ENCODE measurements at regions of chr19 and their contacts with region 1.

Region 1: DNA sequence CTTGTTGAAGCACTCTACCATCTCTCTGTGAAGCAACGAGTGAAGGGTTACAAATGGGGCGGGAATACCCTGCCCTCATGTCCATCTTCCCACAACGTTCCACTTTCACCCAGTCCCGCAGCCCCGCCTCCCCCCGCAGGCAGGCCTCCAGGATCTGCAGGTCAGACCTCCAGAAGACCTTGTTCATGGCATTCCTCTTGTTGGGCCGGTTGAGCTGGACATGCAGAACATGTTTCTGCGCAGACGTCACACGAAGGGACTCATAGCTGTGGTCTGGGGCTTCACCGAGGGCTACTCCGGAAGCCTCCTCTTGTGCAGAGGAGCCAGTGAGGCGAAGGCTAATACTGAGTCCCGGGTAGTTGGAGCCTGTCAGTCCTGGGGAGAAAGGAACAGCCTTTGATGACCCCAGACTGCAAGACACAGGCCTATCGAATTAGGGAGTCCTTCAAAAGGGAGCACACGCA is 420 bp downstream of the ECH1 start:
- DNase-seq: peak in 1 of 2 donors; percentile 81
- ATAC-seq: peak; percentile 23 to 24
- H3K4me3 ChIP-seq: peak overlapping the region; percentile 63 to 83 (median 74)
- H3K27ac ChIP-seq: peak overlapping the region; percentile 91 to 100 (median 98)
- H3K4me1 ChIP-seq: peaks cover 49 to 60% of the 10 kb centered on the region in 2 donors
- H3K27me3 ChIP-seq: no peaks in the 10 kb centered on the region
- CTCF ChIP-seq: no peak
- POLR2A ChIP-seq: no peak

Region 2: DNA sequence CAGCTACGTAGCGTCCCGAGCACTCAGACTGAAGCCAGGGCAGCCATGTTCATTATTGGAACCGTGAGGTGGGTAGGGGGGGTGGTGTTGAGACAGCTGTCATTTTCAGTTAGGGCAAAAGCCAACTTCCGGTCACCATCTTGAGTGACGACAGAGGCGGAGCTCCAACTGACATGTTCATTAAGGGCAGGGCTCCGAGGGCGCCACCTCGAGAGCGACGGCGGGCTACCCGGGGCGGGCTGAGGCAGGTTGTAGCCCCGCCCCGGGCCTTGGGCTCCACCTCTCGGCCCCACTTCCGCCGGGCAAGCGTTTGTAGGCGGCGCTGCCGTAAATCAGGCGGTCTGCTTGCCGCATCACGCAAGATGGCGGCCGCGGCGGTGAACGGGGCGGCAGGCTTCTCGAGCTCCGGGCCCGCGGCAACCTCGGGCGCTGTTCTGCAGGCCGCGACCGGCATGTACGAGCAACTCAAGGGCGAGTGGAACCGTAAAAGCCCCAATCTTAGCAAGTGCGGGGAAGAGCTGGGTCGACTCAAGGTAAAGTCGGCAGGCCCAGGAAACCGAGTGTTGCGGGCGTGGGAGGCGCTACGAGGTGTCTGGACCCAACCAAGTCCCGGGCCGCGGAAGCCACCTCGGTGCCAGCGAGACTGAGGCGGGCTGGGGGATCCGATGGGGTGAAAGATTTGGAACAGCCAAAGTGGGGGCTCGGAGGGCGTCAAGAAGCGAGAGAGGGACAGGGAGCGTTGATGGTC is 456.6 kb before region 1 on chr19 and contains the start of gene PSMD8:
- in situ Hi-C with region 1: loop called in 1 of 4 experiments (anchors 25 kb)
- intact Hi-C with region 1: loop called (anchors 5 kb)
- DNase-seq: peak; percentile 99 to 100
- ATAC-seq: peak; percentile 81 to 88
- H3K4me3 ChIP-seq: peak within 1 kb of the TSS; percentile 91 to 99 (median 96)
- H3K27ac ChIP-seq: peak within 1 kb of the TSS; percentile 97 to 100 (median 98)
- H3K4me1 ChIP-seq: peaks cover 16 to 25% of the 10 kb centered on the region in 2 donors
- H3K27me3 ChIP-seq: no peaks in the 10 kb centered on the region
- CTCF ChIP-seq: peak in 3 of 5 experiments; percentile 6 to 34 (median 16)
- POLR2A ChIP-seq: peak; percentile 99
- total RNA-seq, gene PSMD8: 819 to 1,400 (median 1,309) TPM

Region 3: DNA sequence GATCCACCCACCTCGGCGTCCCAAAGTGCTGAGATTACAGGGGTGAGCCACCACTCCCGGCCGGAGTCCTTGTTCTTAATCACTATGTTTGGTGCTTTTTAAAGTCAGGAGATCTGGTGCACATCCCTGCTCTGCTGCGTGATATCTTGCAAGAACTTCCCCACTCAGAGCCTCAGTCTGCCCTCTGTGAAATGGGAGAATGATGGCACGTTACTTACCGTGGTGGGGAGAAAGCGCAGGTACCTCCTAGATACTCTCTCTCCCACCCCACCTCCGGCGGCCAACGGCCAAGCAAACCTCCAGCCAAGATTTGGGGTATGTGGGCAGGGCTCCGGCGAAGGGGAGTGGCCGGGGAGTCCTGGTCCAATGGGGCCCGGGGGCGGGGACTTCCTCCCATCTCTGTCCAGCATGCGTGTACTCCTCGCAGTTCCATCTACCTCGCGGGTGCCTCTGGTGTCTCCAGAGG is 397.9 kb before region 1 on chr19 and contains the start of gene RYR1:
- in situ Hi-C with region 1: no loop called
- intact Hi-C with region 1: loop called (anchors 10 kb)
- DNase-seq: peak; percentile 92 to 96
- ATAC-seq: peak; percentile 63 to 66
- H3K4me3 ChIP-seq: peak within 1 kb of the TSS; percentile 69 to 94 (median 86)
- H3K27ac ChIP-seq: peak within 1 kb of the TSS; percentile 98 to 100 (median 98)
- H3K4me1 ChIP-seq: peaks cover 43 to 46% of the 10 kb centered on the region in 2 donors
- H3K27me3 ChIP-seq: no peaks in the 10 kb centered on the region
- CTCF ChIP-seq: no peak
- POLR2A ChIP-seq: peak; percentile 67 to 73
- total RNA-seq, gene RYR1: 607 to 831 (median 724) TPM

Region 4: GRCh38 chr19:38891771-38892170 is 60.6 kb after region 1 on chr19:
- in situ Hi-C with region 1: no loop called
- intact Hi-C with region 1: loop called (anchors 2 kb)
- DNase-seq: no peak
- ATAC-seq: no peak
- H3K4me3 ChIP-seq: no peak overlapping the region
- H3K27ac ChIP-seq: peak overlapping the region; percentile 85 to 96 (median 88)
- H3K4me1 ChIP-seq: peaks cover 54 to 70% of the 10 kb centered on the region in 2 donors
- H3K27me3 ChIP-seq: no peaks in the 10 kb centered on the region
- CTCF ChIP-seq: no peak
- POLR2A ChIP-seq: no peak

Region 5: GRCh38 chr19:38899447-38900219 is 68.5 kb after region 1 on chr19 and contains the starts of genes NFKBIB and SIRT2:
- in situ Hi-C with region 1: loop called in 1 of 4 experiments (anchors 10 kb)
- intact Hi-C with region 1: loop called (anchors 1 kb)
- DNase-seq: peak; percentile 100
- ATAC-seq: peak; percentile 97 to 98
- H3K4me3 ChIP-seq: peak within 1 kb of the TSS; percentile 74 to 98 (median 90)
- H3K27ac ChIP-seq: peak within 1 kb of the TSS; percentile 90 to 99 (median 96)
- H3K4me1 ChIP-seq: peaks cover 45 to 50% of the 10 kb centered on the region in 2 donors
- H3K27me3 ChIP-seq: no peaks in the 10 kb centered on the region
- CTCF ChIP-seq: no peak
- POLR2A ChIP-seq: peak; percentile 94 to 98
- total RNA-seq, gene NFKBIB: 32.2 to 63.8 (median 53.6) TPM
- total RNA-seq, gene SIRT2: 208 to 327 (median 285) TPM

Region 6: GRCh38 chr19:38929929-38930775 is 99.0 kb after region 1 on chr19 and contains the start of gene SARS2:
- in situ Hi-C with region 1: no loop called
- intact Hi-C with region 1: loop called (anchors 5 kb)
- DNase-seq: peak; percentile 84 to 86
- ATAC-seq: peak; percentile 87 to 91
- H3K4me3 ChIP-seq: peak within 1 kb of the TSS; percentile 64 to 86 (median 76)
- H3K27ac ChIP-seq: peak within 1 kb of the TSS; percentile 81 to 94 (median 88)
- H3K4me1 ChIP-seq: peaks cover 14 to 17% of the 10 kb centered on the region in 2 donors
- H3K27me3 ChIP-seq: no peaks in the 10 kb centered on the region
- CTCF ChIP-seq: peak; percentile 97 to 100 (median 98)
- POLR2A ChIP-seq: no peak
- total RNA-seq, gene SARS2: 12.1 to 30.0 (median 27.8) TPM

Measured in gastrocnemius medialis (tissue), 4 donors.